Activated naive CD8-positive, alpha-beta T cell treated with anti-CD3 and anti-CD28 coated beads, Interleukin-2, amount 10 ng/mL, durations not matched to agents 7 days and 5 days (primary cell): ENCODE measurements at regions of chr14 and their contacts with region 1.

Region 1: GRCh38 chr14:52706724-52707706 is at the start of gene PSMC6:
- DNase-seq: peak; percentile 91
- ATAC-seq: peak; percentile 95
- H3K4me3 Mint-ChIP-seq: peak within 1 kb of the TSS; percentile 96
- H3K27ac Mint-ChIP-seq: peak within 1 kb of the TSS; percentile 91
- H3K4me1 Mint-ChIP-seq: peaks cover 36% of the 10 kb centered on the region
- H3K27me3 Mint-ChIP-seq: no peaks in the 10 kb centered on the region
- total RNA-seq, gene PSMC6: 79.9 to 80.7 TPM

Region 2: DNA sequence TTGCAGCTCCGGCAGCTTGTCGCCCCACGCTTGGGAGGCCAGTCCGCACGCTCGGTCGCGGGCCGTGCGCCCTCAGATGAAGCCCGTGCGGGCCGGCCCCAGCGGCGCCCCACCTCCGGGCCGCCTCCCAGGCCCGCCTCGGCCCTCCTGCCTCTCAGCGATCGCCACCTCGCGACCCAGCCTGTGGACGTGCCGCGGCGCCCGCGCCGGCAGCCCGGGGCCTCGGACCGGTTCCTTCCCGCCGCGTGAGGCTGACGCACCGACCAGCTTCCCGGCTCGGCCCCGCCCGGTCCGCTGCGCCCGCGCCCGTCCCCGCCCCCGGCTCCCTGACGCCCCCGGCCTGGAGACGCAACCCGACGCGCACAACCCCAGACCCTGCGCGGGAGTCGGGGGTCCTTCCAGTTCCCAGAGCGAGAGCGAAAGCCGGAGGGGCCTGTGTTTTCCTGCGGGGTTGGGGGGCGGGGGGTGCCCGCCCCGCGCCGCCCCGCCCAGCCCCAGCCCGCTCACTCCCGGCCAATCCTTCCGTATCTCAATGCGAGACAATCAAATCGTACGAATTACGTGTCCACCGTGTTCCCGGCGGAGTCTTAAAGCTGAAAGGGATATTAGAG is 11.4 kb before region 1 on chr14 and contains the start of gene ERO1A:
- POLR2A ChIA-PET with region 1: interaction called, 36 read pairs
- DNase-seq: peak; percentile 83
- ATAC-seq: peak; percentile 68
- H3K4me3 Mint-ChIP-seq: peak within 1 kb of the TSS; percentile 92
- H3K27ac Mint-ChIP-seq: peak within 1 kb of the TSS; percentile 95
- H3K4me1 Mint-ChIP-seq: peaks cover 27% of the 10 kb centered on the region
- H3K27me3 Mint-ChIP-seq: no peaks in the 10 kb centered on the region
- total RNA-seq, gene ERO1A: 185 to 203 TPM

Region 3: DNA sequence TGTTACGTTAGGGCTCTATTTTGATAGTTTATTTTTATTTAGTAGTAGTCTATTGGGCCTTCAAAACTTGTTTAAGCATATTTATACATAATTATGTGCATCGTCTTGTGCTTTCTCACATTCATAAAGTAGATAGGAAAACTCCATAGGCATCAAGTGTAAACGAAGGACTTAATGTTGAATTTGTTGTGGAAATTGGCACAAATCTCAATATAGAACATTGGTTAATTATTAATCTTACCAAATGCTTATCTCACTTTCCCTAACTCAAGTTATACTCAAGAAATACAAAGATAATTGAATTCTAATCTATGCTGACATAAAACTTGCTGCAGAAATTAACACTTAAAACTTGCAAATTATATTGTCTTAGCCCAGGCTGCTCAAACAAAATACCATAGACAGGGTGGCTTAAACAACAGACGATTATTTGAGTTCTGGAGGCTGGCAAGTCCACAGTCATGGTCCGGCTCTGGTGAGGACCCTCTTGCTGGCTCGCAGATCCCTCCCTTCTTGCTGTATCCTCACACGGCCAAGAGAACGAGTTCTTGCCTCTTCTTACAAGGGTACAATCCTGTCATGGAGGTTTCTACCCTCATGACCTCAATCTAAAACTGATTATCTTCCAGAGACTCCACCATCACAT is 41.8 kb after region 1 on chr14:
- POLR2A ChIA-PET with region 1: no interaction called
- DNase-seq: no peak
- ATAC-seq: no peak
- H3K4me3 Mint-ChIP-seq: no peak overlapping the region
- H3K27ac Mint-ChIP-seq: no peak overlapping the region
- H3K4me1 Mint-ChIP-seq: peaks cover 9% of the 10 kb centered on the region
- H3K27me3 Mint-ChIP-seq: no peaks in the 10 kb centered on the region